Caco-2 (cell line): ENCODE measurements at regions of chrX and their contacts with region 1.

Region 1: DNA sequence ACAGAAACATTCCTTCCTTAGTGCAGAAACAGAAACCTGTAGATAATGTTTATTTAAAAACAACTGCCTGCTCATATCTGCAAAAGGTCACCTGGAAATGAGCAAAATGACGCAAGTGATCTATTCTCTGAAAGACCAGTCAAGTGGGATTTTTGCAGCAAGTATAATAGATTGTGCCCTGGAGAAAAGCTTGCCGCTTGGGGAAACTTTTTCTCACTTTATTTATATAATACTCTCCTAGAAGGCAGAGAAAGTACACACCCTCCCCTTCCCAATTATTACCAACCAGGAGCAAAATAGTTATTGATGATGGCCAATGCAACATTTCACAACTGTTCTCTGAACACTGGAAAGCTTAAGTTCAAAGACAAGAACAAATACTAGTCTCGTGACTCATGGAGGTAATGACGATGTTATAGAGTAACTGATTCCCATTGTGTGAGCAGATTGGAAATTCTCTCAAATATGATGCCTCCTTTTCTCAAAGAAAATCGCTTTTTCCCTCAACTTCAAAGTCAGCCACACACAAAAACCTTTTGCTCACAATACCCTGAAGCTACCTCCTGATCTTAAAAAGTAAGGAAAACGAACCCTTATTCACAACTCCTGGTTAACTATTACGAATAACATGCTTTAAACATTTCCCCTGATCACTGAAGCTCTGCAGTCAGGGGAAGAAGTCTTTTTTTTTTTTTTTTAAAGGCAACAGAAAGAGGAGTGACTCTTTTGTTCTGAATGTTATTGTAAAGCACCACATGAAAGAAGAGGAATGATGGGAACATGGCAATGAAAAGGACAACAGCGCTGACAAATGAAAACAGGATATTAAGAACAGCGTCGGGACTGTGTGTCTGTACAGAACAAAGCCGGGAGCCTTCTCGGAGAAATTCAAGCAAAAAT is 41.0 kb downstream of the MID1 start:
- DNase-seq: peak in 1 of 2 experiments; percentile 58
- H3K4me3 ChIP-seq: no peak overlapping the region
- H3K4me3 Mint-ChIP-seq: peak overlapping the region; percentile 71
- H3K27ac Mint-ChIP-seq: peak overlapping the region; percentile 95
- H3K4me1 ChIP-seq: peaks cover 20% of the 10 kb centered on the region
- H3K4me1 Mint-ChIP-seq: no peaks in the 10 kb centered on the region
- H3K27me3 ChIP-seq: no peaks in the 10 kb centered on the region
- H3K27me3 Mint-ChIP-seq: no peaks in the 10 kb centered on the region
- CTCF ChIP-seq: no peak

Region 2: DNA sequence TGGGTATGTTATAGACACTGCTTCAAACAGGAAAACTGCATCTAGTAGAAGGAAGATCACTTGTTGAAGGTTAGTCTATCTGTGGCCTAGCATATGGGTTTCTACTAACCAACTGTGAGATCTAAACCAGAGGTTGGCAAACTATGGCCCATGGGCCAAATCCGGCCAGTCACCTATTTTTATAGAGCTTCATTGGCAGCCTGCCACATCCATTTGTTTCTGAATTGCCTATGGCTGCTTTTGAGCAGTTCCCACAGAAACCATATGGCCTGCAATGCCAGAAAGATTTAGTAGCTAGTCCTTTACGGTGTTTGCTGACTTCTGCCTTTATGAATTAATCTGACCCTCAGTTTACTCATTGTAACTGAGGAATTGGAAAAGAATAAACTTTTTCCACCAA is 30.1 kb before region 1 on chrX:
- CTCF ChIA-PET with region 1: no interaction called
- POLR2A ChIA-PET with region 1: no interaction called
- intact Hi-C with region 1: loop called (anchors 1 kb)
- DNase-seq: no peak
- H3K4me3 ChIP-seq: no peak overlapping the region
- H3K4me3 Mint-ChIP-seq: no peak overlapping the region
- H3K27ac Mint-ChIP-seq: no peak overlapping the region
- H3K4me1 ChIP-seq: peaks cover 24% of the 10 kb centered on the region
- H3K4me1 Mint-ChIP-seq: peaks cover 14% of the 10 kb centered on the region
- H3K27me3 ChIP-seq: no peaks in the 10 kb centered on the region
- H3K27me3 Mint-ChIP-seq: no peaks in the 10 kb centered on the region
- CTCF ChIP-seq: no peak

Region 3: GRCh38 chrX:10591363-10592335 is 12.3 kb after region 1 on chrX:
- CTCF ChIA-PET with region 1: no interaction called
- POLR2A ChIA-PET with region 1: interaction called, 4 read pairs
- intact Hi-C with region 1: loop called (anchors 1 kb)
- DNase-seq: no peak
- H3K4me3 ChIP-seq: no peak overlapping the region
- H3K4me3 Mint-ChIP-seq: no peak overlapping the region
- H3K27ac Mint-ChIP-seq: peak overlapping the region; percentile 53
- H3K4me1 ChIP-seq: peaks cover 14% of the 10 kb centered on the region; the same call in 1 of the 2 replicates
- H3K4me1 Mint-ChIP-seq: peaks cover 13% of the 10 kb centered on the region
- H3K27me3 ChIP-seq: no peaks in the 10 kb centered on the region
- H3K27me3 Mint-ChIP-seq: no peaks in the 10 kb centered on the region
- CTCF ChIP-seq: no peak